ENCODE measurements at regions of chr14 and their contacts with region 1.

Region 1: DNA sequence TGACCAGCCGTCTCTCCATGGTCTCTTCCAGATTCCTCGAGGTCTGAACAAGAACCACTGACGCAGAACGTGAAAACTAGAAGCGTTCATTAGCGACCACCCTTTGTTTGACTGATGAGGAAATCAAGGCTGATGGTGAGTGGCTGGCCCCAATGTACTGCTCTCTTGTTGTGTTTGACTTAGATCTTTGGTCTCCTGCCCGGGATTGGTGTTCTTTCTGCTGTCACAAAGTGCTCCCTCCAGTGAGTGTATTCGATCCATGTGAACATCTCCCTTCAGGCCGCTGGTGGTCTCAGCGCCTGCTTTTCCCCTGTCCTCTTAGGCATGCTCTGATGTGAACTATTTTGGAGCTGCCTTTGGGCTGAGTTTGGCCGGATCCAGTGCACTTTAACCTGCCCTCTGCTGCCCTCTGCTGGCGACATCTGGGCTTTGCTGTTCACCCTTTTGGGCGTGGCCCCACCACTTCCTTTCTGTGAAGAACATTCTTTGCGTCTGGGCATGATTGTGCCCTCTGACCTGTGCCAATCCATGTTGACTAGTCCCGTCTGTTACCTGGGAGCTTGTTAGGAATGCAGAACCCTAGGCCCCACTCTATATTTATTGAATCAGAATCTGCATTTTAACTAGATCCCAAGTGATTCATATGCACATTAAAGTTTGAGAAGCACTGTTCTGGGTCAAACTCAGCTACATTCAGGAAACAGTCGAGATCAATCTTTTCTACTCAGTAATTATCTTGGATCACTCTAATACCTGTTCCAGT is 279.2 kb downstream of the TTC6 start:
- DNase-seq: peak; percentile 73
- H3K4me3 Mint-ChIP-seq: no peak overlapping the region
- H3K27ac Mint-ChIP-seq: no peak overlapping the region
- H3K4me1 Mint-ChIP-seq: peaks cover 6% of the 10 kb centered on the region
- H3K27me3 Mint-ChIP-seq: no peaks in the 10 kb centered on the region

Region 2: GRCh38 chr14:37230551-37231194 is 643.9 kb before region 1 on chr14:
- intact Hi-C with region 1: loop called (anchors 5 kb)
- DNase-seq: no peak
- H3K4me3 Mint-ChIP-seq: no peak overlapping the region
- H3K27ac Mint-ChIP-seq: no peak overlapping the region
- H3K4me1 Mint-ChIP-seq: no peaks in the 10 kb centered on the region
- H3K27me3 Mint-ChIP-seq: no peaks in the 10 kb centered on the region

Region 3: GRCh38 chr14:37246427-37246914 is 628.1 kb before region 1 on chr14:
- intact Hi-C with region 1: loop called (anchors 1 kb)
- DNase-seq: no peak
- H3K4me3 Mint-ChIP-seq: no peak overlapping the region
- H3K27ac Mint-ChIP-seq: no peak overlapping the region
- H3K4me1 Mint-ChIP-seq: no peaks in the 10 kb centered on the region
- H3K27me3 Mint-ChIP-seq: no peaks in the 10 kb centered on the region

Region 4: GRCh38 chr14:37709419-37710195 is 165.0 kb before region 1 on chr14:
- intact Hi-C with region 1: loop called (anchors 10 kb)
- DNase-seq: no peak
- H3K4me3 Mint-ChIP-seq: no peak overlapping the region
- H3K27ac Mint-ChIP-seq: no peak overlapping the region
- H3K4me1 Mint-ChIP-seq: no peaks in the 10 kb centered on the region
- H3K27me3 Mint-ChIP-seq: no peaks in the 10 kb centered on the region

Region 5: GRCh38 chr14:37862263-37862662 is 12.3 kb before region 1 on chr14:
- intact Hi-C with region 1: no loop called
- DNase-seq: no peak
- H3K4me3 Mint-ChIP-seq: no peak overlapping the region
- H3K27ac Mint-ChIP-seq: no peak overlapping the region
- H3K4me1 Mint-ChIP-seq: no peaks in the 10 kb centered on the region
- H3K27me3 Mint-ChIP-seq: no peaks in the 10 kb centered on the region